ENCODE measurements at regions of chr3 and their contacts with region 1.

Region 1: GRCh38 chr3:19065027-19065426 is 83.3 kb upstream of the KCNH8 start:
- DNase-seq: peak in 1 of 2 experiments; percentile 2
- H3K4me3 ChIP-seq: no peak overlapping the region
- H3K4me3 Mint-ChIP-seq: no peak overlapping the region
- H3K27ac Mint-ChIP-seq: no peak overlapping the region
- H3K4me1 ChIP-seq: no peaks in the 10 kb centered on the region
- H3K4me1 Mint-ChIP-seq: no peaks in the 10 kb centered on the region
- H3K27me3 ChIP-seq: no peaks in the 10 kb centered on the region
- H3K27me3 Mint-ChIP-seq: no peaks in the 10 kb centered on the region
- CTCF ChIP-seq: peak; percentile 45 to 58

Region 2: GRCh38 chr3:19250959-19251610 is 186.1 kb after region 1 on chr3:
- CTCF ChIA-PET with region 1: interaction called, 5 read pairs
- POLR2A ChIA-PET with region 1: no interaction called
- intact Hi-C with region 1: loop called (anchors 1 kb)
- DNase-seq: peak in 1 of 2 experiments; percentile 6
- H3K4me3 ChIP-seq: no peak overlapping the region
- H3K4me3 Mint-ChIP-seq: no peak overlapping the region
- H3K27ac Mint-ChIP-seq: no peak overlapping the region
- H3K4me1 ChIP-seq: no peaks in the 10 kb centered on the region
- H3K4me1 Mint-ChIP-seq: no peaks in the 10 kb centered on the region
- H3K27me3 ChIP-seq: no peaks in the 10 kb centered on the region
- H3K27me3 Mint-ChIP-seq: no peaks in the 10 kb centered on the region
- CTCF ChIP-seq: no peak

Region 3: GRCh38 chr3:19348929-19349564 is 284.0 kb after region 1 on chr3:
- CTCF ChIA-PET with region 1: no interaction called
- POLR2A ChIA-PET with region 1: no interaction called
- intact Hi-C with region 1: loop called (anchors 2 kb)
- DNase-seq: peak in 1 of 2 experiments; percentile 23
- H3K4me3 ChIP-seq: no peak overlapping the region
- H3K4me3 Mint-ChIP-seq: no peak overlapping the region
- H3K27ac Mint-ChIP-seq: no peak overlapping the region
- H3K4me1 ChIP-seq: no peaks in the 10 kb centered on the region
- H3K4me1 Mint-ChIP-seq: no peaks in the 10 kb centered on the region
- H3K27me3 ChIP-seq: no peaks in the 10 kb centered on the region
- H3K27me3 Mint-ChIP-seq: peaks cover 15% of the 10 kb centered on the region
- CTCF ChIP-seq: peak; percentile 53 to 79

Region 4: DNA sequence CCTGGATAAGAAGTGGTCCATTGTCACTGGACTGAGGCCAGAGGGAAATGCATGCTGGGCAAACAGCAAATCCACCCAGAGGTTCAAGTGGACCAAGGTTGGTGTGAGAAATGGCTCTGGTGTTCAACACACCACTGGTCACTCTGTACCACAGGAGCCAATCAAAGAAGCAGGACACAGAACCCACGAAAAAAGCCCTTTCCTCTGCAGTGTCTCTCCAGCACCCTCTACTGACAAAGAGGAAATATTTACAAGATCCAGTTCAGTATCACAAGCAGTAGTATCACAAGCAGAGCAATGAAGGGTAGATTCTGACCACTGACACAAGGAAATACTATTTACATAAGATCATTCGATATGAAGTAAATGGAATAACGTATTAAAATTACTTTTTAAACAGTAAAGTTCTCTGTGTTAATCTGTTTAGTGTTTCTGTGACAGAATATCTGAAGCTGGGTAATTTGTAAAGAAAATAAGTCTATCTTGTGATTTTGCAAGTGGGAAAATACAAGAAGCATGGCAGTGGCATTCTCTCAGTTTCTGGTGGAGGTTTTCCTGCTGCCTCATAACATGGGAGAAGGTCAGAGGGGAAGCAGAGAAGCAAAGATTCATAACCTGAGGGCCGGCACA is 478.3 kb after region 1 on chr3:
- CTCF ChIA-PET with region 1: no interaction called
- POLR2A ChIA-PET with region 1: no interaction called
- intact Hi-C with region 1: loop called (anchors 2 kb)
- DNase-seq: peak; percentile 18 to 36
- H3K4me3 ChIP-seq: no peak overlapping the region
- H3K4me3 Mint-ChIP-seq: no peak overlapping the region
- H3K27ac Mint-ChIP-seq: no peak overlapping the region
- H3K4me1 ChIP-seq: no peaks in the 10 kb centered on the region
- H3K4me1 Mint-ChIP-seq: no peaks in the 10 kb centered on the region
- H3K27me3 ChIP-seq: no peaks in the 10 kb centered on the region
- H3K27me3 Mint-ChIP-seq: peaks cover 3% of the 10 kb centered on the region
- CTCF ChIP-seq: peak; percentile 56 to 64